ENCODE measurements at regions of chr1 and their contacts with region 1.

Region 1: GRCh38 chr1:50605186-50605875 is 182.1 kb upstream of the DMRTA2 start:
- DNase-seq: peak; percentile 22
- ATAC-seq: peak; percentile 88
- H3K4me3 Mint-ChIP-seq: no peak overlapping the region
- H3K27ac Mint-ChIP-seq: no peak overlapping the region
- H3K4me1 Mint-ChIP-seq: peaks cover under 1% of the 10 kb centered on the region; the same call in 1 of the 2 replicates
- H3K27me3 Mint-ChIP-seq: no peaks in the 10 kb centered on the region
- CTCF ChIP-seq: no peak

Region 2: DNA sequence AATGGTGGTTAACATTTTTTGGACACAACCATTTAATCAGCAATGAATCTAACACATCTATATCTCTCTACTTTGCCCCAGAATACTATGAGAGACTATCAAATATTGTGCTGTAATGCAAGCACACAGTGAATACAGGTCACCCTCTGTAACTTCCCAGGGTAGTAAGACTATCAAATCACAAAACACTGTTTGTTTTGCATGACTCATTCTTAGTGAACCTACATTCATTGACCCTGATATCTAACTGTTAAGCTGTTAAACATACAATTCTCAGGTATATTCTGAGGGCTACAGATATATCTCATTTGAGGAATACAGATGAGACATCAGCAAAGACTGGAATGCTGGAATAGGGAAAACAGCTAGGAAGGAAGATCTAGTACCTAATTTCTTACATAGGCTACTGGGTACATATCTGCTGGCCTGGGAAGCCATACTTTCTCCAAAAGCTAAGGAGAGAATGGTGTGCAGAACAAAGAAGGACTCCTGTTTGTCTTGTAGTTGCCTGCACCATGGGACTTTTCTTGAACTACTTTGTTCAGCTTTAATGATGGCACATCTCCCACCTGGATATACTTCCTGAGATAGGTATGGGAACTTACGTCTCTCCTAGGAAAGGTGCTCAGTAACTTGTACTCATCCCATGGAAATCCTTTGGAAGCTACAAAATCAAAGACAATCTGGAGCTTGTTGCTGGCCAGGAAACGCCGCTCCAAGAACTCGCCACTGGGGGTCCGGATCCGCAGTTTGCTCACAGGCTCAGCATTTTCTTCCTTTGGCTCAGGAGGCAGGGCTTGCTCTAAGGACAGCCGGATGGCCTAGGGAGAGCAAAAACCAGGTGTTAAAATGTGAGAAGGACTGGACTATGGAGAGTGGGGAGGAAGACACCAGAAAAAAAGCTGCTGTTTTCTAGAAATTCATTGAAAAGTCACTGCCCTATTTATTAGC is 130.2 kb before region 1 on chr1:
- CTCF ChIA-PET with region 1: interaction called, 10 read pairs
- POLR2A ChIA-PET with region 1: no interaction called
- DNase-seq: peak; percentile 65
- ATAC-seq: peak; percentile 89
- H3K4me3 Mint-ChIP-seq: no peak overlapping the region
- H3K27ac Mint-ChIP-seq: no peak overlapping the region
- H3K4me1 Mint-ChIP-seq: peaks cover 36% of the 10 kb centered on the region
- H3K27me3 Mint-ChIP-seq: no peaks in the 10 kb centered on the region
- CTCF ChIP-seq: no peak

Region 3: GRCh38 chr1:50516056-50516455 is 89.3 kb before region 1 on chr1:
- CTCF ChIA-PET with region 1: no interaction called
- POLR2A ChIA-PET with region 1: no interaction called
- DNase-seq: no peak
- ATAC-seq: no peak
- H3K4me3 Mint-ChIP-seq: no peak overlapping the region
- H3K27ac Mint-ChIP-seq: no peak overlapping the region
- H3K4me1 Mint-ChIP-seq: no peaks in the 10 kb centered on the region
- H3K27me3 Mint-ChIP-seq: no peaks in the 10 kb centered on the region
- CTCF ChIP-seq: no peak

Region 4: GRCh38 chr1:50553921-50554320 is 51.4 kb before region 1 on chr1:
- CTCF ChIA-PET with region 1: no interaction called
- POLR2A ChIA-PET with region 1: no interaction called
- DNase-seq: no peak
- ATAC-seq: no peak
- H3K4me3 Mint-ChIP-seq: no peak overlapping the region
- H3K27ac Mint-ChIP-seq: no peak overlapping the region
- H3K4me1 Mint-ChIP-seq: no peaks in the 10 kb centered on the region
- H3K27me3 Mint-ChIP-seq: no peaks in the 10 kb centered on the region
- CTCF ChIP-seq: no peak

Region 5: GRCh38 chr1:50704126-50704525 is 98.8 kb after region 1 on chr1:
- CTCF ChIA-PET with region 1: interaction called, 10 read pairs
- POLR2A ChIA-PET with region 1: no interaction called
- DNase-seq: no peak
- ATAC-seq: no peak
- H3K4me3 Mint-ChIP-seq: no peak overlapping the region
- H3K27ac Mint-ChIP-seq: 0 out of 2 replicates have a peak overlapping the region, but pooled peaks have one; percentile 83
- H3K4me1 Mint-ChIP-seq: peaks cover 54% of the 10 kb centered on the region
- H3K27me3 Mint-ChIP-seq: no peaks in the 10 kb centered on the region
- CTCF ChIP-seq: peak; percentile 75